CD8-positive, alpha-beta T cell (primary cell): ENCODE measurements at regions of chr14 and their contacts with region 1.

Region 1: GRCh38 chr14:50116181-50116956 is at the start of gene VCPKMT:
- DNase-seq: peak; percentile 91 to 98 (median 96)
- ATAC-seq: peak; percentile 97
- H3K4me3 ChIP-seq: peak within 1 kb of the TSS; percentile 69 to 92
- H3K4me3 Mint-ChIP-seq: peak within 1 kb of the TSS; percentile 98
- H3K27ac ChIP-seq: peak within 1 kb of the TSS; percentile 85 to 86
- H3K27ac Mint-ChIP-seq: peak within 1 kb of the TSS; percentile 99
- H3K4me1 ChIP-seq: peaks cover 20% of the 10 kb centered on the region
- H3K4me1 Mint-ChIP-seq: peaks cover 28% of the 10 kb centered on the region
- H3K27me3 ChIP-seq: no peaks in the 10 kb centered on the region
- H3K27me3 Mint-ChIP-seq: no peaks in the 10 kb centered on the region
- CTCF ChIP-seq: no peak
- total RNA-seq, gene VCPKMT: 38.2 to 39.6 TPM

Region 2: GRCh38 chr14:49581209-49582112 is 534.9 kb before region 1 on chr14:
- CTCF ChIA-PET with region 1: no interaction called
- POLR2A ChIA-PET with region 1: no interaction called
- intact Hi-C with region 1: no loop called
- DNase-seq: no peak
- ATAC-seq: no peak
- H3K4me3 ChIP-seq: no peak overlapping the region
- H3K4me3 Mint-ChIP-seq: no peak overlapping the region
- H3K27ac ChIP-seq: no peak overlapping the region
- H3K27ac Mint-ChIP-seq: peak overlapping the region; percentile 18
- H3K4me1 ChIP-seq: peaks cover 50% of the 10 kb centered on the region
- H3K4me1 Mint-ChIP-seq: peaks cover 76% of the 10 kb centered on the region
- H3K27me3 ChIP-seq: no peaks in the 10 kb centered on the region
- H3K27me3 Mint-ChIP-seq: no peaks in the 10 kb centered on the region
- CTCF ChIP-seq: no peak

Region 3: GRCh38 chr14:49598485-49599300 is 517.7 kb before region 1 on chr14 and contains the start of gene LRR1:
- CTCF ChIA-PET with region 1: no interaction called
- POLR2A ChIA-PET with region 1: no interaction called
- intact Hi-C with region 1: loop called in 1 of 2 experiments (anchors 10 kb)
- DNase-seq: peak; percentile 79 to 91 (median 84)
- ATAC-seq: peak; percentile 86
- H3K4me3 ChIP-seq: peak within 1 kb of the TSS; percentile 84 to 99
- H3K4me3 Mint-ChIP-seq: peak within 1 kb of the TSS; percentile 99
- H3K27ac ChIP-seq: peak within 1 kb of the TSS; percentile 92 to 95
- H3K27ac Mint-ChIP-seq: peak within 1 kb of the TSS; percentile 100
- H3K4me1 ChIP-seq: peaks cover 12% of the 10 kb centered on the region
- H3K4me1 Mint-ChIP-seq: peaks cover 31% of the 10 kb centered on the region
- H3K27me3 ChIP-seq: no peaks in the 10 kb centered on the region
- H3K27me3 Mint-ChIP-seq: no peaks in the 10 kb centered on the region
- CTCF ChIP-seq: no peak
- total RNA-seq, gene LRR1: 6.2 to 7.3 TPM

Region 4: GRCh38 chr14:49692811-49693734 is 423.3 kb before region 1 on chr14 and contains the start of gene KLHDC1:
- CTCF ChIA-PET with region 1: no interaction called
- POLR2A ChIA-PET with region 1: no interaction called
- intact Hi-C with region 1: loop called in 1 of 2 experiments (anchors 2 kb)
- DNase-seq: peak; percentile 56 to 90 (median 81)
- ATAC-seq: peak; percentile 84
- H3K4me3 ChIP-seq: peak within 1 kb of the TSS; percentile 49 to 63
- H3K4me3 Mint-ChIP-seq: peak within 1 kb of the TSS; percentile 78
- H3K27ac ChIP-seq: peak within 1 kb of the TSS; percentile 59 to 82
- H3K27ac Mint-ChIP-seq: peak within 1 kb of the TSS; percentile 90
- H3K4me1 ChIP-seq: peaks cover 15% of the 10 kb centered on the region
- H3K4me1 Mint-ChIP-seq: peaks cover 34% of the 10 kb centered on the region
- H3K27me3 ChIP-seq: no peaks in the 10 kb centered on the region
- H3K27me3 Mint-ChIP-seq: no peaks in the 10 kb centered on the region
- CTCF ChIP-seq: no peak
- total RNA-seq, gene KLHDC1: 8.5 to 11.0 TPM

Region 5: GRCh38 chr14:49786315-49787110 is 329.9 kb before region 1 on chr14:
- CTCF ChIA-PET with region 1: interaction called, 3 read pairs
- POLR2A ChIA-PET with region 1: no interaction called
- intact Hi-C with region 1: loop called in 1 of 2 experiments (anchors 5 kb)
- DNase-seq: no peak
- ATAC-seq: no peak
- H3K4me3 ChIP-seq: no peak overlapping the region
- H3K4me3 Mint-ChIP-seq: no peak overlapping the region
- H3K27ac ChIP-seq: no peak overlapping the region
- H3K27ac Mint-ChIP-seq: peak overlapping the region; percentile 15
- H3K4me1 ChIP-seq: no peaks in the 10 kb centered on the region
- H3K4me1 Mint-ChIP-seq: peaks cover 2% of the 10 kb centered on the region
- H3K27me3 ChIP-seq: no peaks in the 10 kb centered on the region
- H3K27me3 Mint-ChIP-seq: no peaks in the 10 kb centered on the region
- CTCF ChIP-seq: no peak

Region 6: DNA sequence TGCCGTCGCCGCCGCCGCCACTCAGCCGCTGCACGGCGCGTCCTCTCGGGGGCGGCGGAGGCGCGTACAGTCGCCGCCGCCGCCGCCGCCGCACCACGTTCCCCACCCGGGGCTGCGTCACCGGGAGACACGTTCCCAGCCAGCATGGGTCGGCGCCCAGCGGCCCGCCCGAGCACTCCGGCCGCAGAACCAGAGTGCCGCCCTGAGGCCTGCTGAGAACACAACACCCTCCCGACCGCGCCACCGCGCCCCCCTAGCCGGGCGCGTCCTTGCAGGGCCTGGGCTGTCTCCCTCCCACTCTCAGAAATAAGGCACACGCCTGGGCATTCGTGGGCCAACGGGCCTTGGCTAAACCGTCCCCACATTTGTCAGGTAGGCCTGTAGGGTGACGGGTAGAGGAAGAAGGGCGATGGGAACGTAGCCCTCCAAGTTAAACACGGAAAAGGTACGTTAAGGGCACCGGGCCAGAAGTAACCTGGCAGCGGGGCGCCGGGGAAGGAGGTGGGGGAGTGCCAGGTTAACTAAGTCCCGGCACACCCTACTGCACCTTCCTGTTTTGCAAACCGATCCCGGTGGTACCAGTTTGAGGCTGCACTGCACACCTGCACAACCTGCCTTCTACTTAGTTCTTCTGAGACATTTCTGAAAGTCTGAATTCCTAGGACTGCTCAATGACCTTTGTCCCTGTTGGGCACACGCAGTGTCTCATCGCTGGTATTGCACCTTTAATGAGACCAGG is 416.3 kb after region 1 on chr14 and contains the start of gene MAP4K5:
- CTCF ChIA-PET with region 1: no interaction called
- POLR2A ChIA-PET with region 1: no interaction called
- intact Hi-C with region 1: loop called (anchors 5 kb)
- DNase-seq: peak; percentile 73 to 95 (median 88)
- ATAC-seq: peak; percentile 93
- H3K4me3 ChIP-seq: peak within 1 kb of the TSS; percentile 45 to 88
- H3K4me3 Mint-ChIP-seq: peak within 1 kb of the TSS; percentile 89
- H3K27ac ChIP-seq: peak within 1 kb of the TSS; percentile 47 to 70
- H3K27ac Mint-ChIP-seq: peak within 1 kb of the TSS; percentile 92
- H3K4me1 ChIP-seq: peaks cover 42% of the 10 kb centered on the region
- H3K4me1 Mint-ChIP-seq: peaks cover 49% of the 10 kb centered on the region
- H3K27me3 ChIP-seq: no peaks in the 10 kb centered on the region
- H3K27me3 Mint-ChIP-seq: no peaks in the 10 kb centered on the region
- CTCF ChIP-seq: peak; percentile 69
- total RNA-seq, gene MAP4K5: 32.0 to 32.7 TPM